ENCODE measurements at regions of chr19 and their contacts with region 1.

Region 1: GRCh38 chr19:48255376-48256303 is at the start of gene CARD8:
- DNase-seq: peak; percentile 86
- H3K4me3 ChIP-seq: peak within 1 kb of the TSS; percentile 54
- H3K27ac ChIP-seq: peak within 1 kb of the TSS; percentile 97
- H3K4me1 ChIP-seq: peaks cover 6% of the 10 kb centered on the region
- H3K27me3 ChIP-seq: no peaks in the 10 kb centered on the region
- CTCF ChIP-seq: no peak
- total RNA-seq, gene CARD8: 17.9 to 20.3 TPM

Region 2: DNA sequence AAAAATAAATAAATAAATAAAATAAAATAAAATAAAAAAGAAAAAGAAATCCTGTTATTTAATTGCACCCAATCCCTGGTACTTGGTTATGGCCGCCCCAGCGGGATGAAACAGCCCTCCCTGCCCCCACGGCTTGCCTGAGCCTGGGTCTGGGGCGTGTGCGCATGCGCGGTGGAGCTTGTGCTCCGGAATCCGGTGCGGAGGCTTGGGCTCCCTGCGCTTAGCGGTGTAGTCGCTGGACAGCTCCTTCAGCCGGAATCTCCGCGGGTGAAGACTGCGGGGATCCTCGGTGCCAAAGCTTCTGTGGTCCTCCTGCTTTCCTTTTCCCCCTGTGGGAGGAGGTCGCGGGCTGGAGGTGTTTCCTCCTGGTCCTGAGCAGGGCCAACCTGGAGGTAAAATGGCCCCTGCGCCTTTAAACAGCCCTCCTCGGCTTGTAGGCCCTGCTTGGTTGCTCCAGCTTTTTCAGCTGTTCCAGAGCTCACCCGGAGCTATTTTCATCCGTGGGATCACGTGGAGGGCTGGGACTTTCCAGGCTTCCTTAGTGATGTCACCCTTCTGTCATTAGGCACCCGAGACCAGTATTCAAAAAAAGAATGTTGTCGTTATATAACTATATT is 145.2 kb before region 1 on chr19 and contains the start of gene PLA2G4C:
- intact Hi-C with region 1: loop called (anchors 5 kb)
- DNase-seq: peak; percentile 81
- H3K4me3 ChIP-seq: peak within 1 kb of the TSS; percentile 39
- H3K27ac ChIP-seq: peak within 1 kb of the TSS; percentile 96
- H3K4me1 ChIP-seq: no peaks in the 10 kb centered on the region
- H3K27me3 ChIP-seq: no peaks in the 10 kb centered on the region
- CTCF ChIP-seq: no peak
- total RNA-seq, gene PLA2G4C: 1.7 to 6.8 TPM

Region 3: DNA sequence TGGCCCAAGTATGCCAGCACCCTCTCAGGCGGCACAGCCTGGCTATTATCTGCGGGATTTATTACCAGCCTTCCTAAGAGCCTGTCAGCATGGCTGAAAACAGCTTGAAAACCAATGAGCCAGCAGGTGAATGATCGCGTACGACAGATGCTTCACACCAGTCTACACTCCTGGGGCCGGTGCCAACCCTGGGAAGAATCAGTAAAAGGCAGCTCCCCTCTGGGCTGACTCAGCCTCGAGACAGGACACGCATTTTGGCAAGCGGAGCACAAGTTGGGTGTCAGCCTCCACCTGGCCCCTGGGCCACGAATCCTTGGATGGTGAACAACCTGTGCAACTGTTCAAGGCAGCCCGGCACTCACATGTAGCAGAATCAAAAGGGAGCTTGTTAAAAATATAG is 85.4 kb after region 1 on chr19:
- intact Hi-C with region 1: loop called (anchors 10 kb)
- DNase-seq: no peak
- H3K4me3 ChIP-seq: no peak overlapping the region
- H3K27ac ChIP-seq: no peak overlapping the region
- H3K4me1 ChIP-seq: no peaks in the 10 kb centered on the region
- H3K27me3 ChIP-seq: no peaks in the 10 kb centered on the region
- CTCF ChIP-seq: no peak